ENCODE measurements at regions of chr11 and their contacts with region 1.

Region 1: GRCh38 chr11:44094260-44094868 is 1.1 kb upstream of the EXT2 start:
- DNase-seq: peak; percentile 66
- H3K4me3 ChIP-seq: no peak overlapping the region
- H3K27ac ChIP-seq: no peak overlapping the region
- H3K4me1 ChIP-seq: peaks cover 17% of the 10 kb centered on the region
- H3K27me3 ChIP-seq: peaks cover 4% of the 10 kb centered on the region
- CTCF ChIP-seq: peak; percentile 83

Region 2: GRCh38 chr11:44065841-44066731 is 28.3 kb before region 1 on chr11 and contains the start of gene ACCS:
- CTCF ChIA-PET with region 1: interaction called, 24 read pairs
- dilution Hi-C with region 1: no loop called
- in situ Hi-C with region 1: no loop called
- intact Hi-C with region 1: no loop called
- DNase-seq: peak; percentile 71
- H3K4me3 ChIP-seq: peak within 1 kb of the TSS; percentile 58 to 77 (median 73)
- H3K27ac ChIP-seq: peak within 1 kb of the TSS; percentile 69
- H3K4me1 ChIP-seq: peaks cover 14% of the 10 kb centered on the region
- H3K27me3 ChIP-seq: no peaks in the 10 kb centered on the region
- CTCF ChIP-seq: peak; percentile 51 to 76
- total RNA-seq, gene ACCS: 6.8 to 13.0 TPM

Region 3: DNA sequence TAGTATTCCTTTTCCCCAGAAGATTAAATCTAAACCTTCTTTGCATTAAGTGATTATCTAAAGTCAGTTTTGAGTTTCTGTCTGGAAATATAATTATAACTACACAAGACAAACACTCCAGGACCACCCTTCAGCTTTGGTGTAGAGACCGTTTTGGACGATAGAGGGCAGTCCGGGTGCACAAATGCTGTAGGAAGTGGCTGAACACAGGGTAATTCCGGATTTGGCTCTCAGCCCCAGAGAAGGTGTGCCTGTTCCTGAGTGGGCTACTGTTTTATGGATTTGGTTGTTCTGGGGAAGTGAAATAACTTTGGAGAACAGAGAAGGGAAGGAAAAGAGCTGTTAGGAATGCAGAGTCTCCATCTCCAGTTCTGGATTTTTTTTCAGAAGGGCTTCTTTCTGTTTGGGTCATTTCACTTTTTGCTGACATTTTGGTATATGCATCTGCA is 15.9 kb after region 1 on chr11:
- CTCF ChIA-PET with region 1: interaction called, 14 read pairs
- dilution Hi-C with region 1: no loop called
- in situ Hi-C with region 1: no loop called
- intact Hi-C with region 1: no loop called
- DNase-seq: peak; percentile 32
- H3K4me3 ChIP-seq: no peak overlapping the region
- H3K27ac ChIP-seq: no peak overlapping the region
- H3K4me1 ChIP-seq: peaks cover 4% of the 10 kb centered on the region
- H3K27me3 ChIP-seq: no peaks in the 10 kb centered on the region
- CTCF ChIP-seq: peak; percentile 78 to 84

Region 4: DNA sequence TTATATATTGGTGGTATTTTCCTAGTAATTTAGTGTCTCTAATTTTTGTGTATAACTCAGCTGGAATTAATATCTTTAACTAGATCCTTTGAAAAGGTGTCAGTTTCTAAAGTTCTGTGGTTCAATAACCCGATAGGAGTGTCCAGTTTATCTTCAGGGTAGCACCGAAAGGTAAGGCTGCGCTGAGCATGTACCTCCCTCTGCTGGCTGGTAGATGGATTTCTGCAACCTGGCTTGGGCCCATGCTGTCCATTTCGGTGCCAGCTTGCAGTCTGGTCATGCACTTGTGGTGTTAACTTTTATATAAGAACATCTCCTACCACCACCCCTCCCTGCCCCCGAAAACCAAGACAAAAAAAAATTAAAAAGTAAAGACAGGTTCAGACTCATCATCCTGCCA is 25.8 kb after region 1 on chr11:
- CTCF ChIA-PET with region 1: interaction called, 7 read pairs
- dilution Hi-C with region 1: no loop called
- in situ Hi-C with region 1: no loop called
- intact Hi-C with region 1: loop called (anchors 1 kb)
- DNase-seq: no peak
- H3K4me3 ChIP-seq: no peak overlapping the region
- H3K27ac ChIP-seq: no peak overlapping the region
- H3K4me1 ChIP-seq: no peaks in the 10 kb centered on the region
- H3K27me3 ChIP-seq: no peaks in the 10 kb centered on the region
- CTCF ChIP-seq: peak; percentile 45 to 64

Region 5: DNA sequence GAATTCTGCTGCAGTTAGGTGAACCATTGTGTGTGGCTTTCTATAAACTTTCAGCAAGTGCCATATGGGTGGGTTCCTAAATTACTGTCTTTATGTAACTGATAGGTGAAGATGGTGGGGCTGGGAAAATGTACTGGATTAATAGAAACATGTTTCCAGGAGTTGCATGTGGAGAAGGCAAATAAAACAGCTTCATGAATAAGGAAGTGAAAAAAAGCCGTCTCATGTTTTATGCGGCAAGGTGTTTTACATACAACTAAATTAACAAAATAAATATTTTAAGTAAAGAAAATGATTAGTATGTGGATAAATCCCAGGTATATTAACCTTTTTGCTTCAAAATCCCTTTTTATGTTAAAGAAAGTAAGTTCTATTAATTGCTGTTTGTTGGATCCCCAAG is 68.3 kb after region 1 on chr11:
- CTCF ChIA-PET with region 1: interaction called, 13 read pairs
- dilution Hi-C with region 1: no loop called
- in situ Hi-C with region 1: no loop called
- intact Hi-C with region 1: no loop called
- DNase-seq: no peak
- H3K4me3 ChIP-seq: no peak overlapping the region
- H3K27ac ChIP-seq: no peak overlapping the region
- H3K4me1 ChIP-seq: no peaks in the 10 kb centered on the region
- H3K27me3 ChIP-seq: no peaks in the 10 kb centered on the region
- CTCF ChIP-seq: no peak

Region 6: DNA sequence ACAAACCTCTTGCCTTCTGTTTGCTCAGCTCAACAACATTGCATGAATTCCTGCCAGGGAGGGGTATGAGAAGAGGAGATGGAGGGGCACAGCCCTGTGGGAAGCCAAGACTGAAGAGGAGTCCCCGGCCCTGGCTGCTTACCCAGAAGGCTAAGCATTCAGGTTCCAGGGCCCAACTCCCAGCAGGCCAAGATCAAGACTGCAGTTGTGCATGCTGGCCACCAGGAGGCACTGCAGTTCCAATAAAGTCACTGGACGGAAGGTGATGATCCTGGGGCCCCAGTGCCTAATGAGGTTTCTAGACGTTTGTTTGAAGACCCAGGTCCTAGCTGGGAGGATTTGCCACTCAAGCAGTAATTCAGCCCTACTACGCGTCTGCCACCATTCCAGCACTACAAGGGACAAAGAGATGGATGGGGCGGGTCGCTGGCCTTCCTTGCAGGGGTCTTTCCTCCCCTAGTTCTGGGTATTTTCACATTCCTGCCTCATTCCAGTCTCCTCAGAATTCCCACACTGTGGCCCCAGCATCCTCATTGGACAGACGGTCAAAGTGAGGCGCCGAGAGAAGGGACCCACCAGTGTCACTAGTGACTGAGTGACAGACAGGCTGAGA is 192.0 kb after region 1 on chr11:
- CTCF ChIA-PET with region 1: no interaction called
- dilution Hi-C with region 1: no loop called
- in situ Hi-C with region 1: no loop called
- intact Hi-C with region 1: loop called (anchors 5 kb)
- DNase-seq: peak; percentile 44
- H3K4me3 ChIP-seq: no peak overlapping the region
- H3K27ac ChIP-seq: no peak overlapping the region
- H3K4me1 ChIP-seq: peaks cover 12% of the 10 kb centered on the region
- H3K27me3 ChIP-seq: no peaks in the 10 kb centered on the region
- CTCF ChIP-seq: peak; percentile 95 to 97

Region 7: GRCh38 chr11:44538375-44539054 is 444.2 kb after region 1 on chr11:
- CTCF ChIA-PET with region 1: no interaction called
- dilution Hi-C with region 1: no loop called
- in situ Hi-C with region 1: no loop called
- intact Hi-C with region 1: loop called (anchors 1 kb)
- DNase-seq: peak; percentile 49
- H3K4me3 ChIP-seq: no peak overlapping the region
- H3K27ac ChIP-seq: no peak overlapping the region
- H3K4me1 ChIP-seq: no peaks in the 10 kb centered on the region
- H3K27me3 ChIP-seq: no peaks in the 10 kb centered on the region
- CTCF ChIP-seq: peak; percentile 90 to 92

Measured in mammary epithelial cell (primary cell).